ENCODE measurements at regions of chr22 and their contacts with region 1.

Region 1: DNA sequence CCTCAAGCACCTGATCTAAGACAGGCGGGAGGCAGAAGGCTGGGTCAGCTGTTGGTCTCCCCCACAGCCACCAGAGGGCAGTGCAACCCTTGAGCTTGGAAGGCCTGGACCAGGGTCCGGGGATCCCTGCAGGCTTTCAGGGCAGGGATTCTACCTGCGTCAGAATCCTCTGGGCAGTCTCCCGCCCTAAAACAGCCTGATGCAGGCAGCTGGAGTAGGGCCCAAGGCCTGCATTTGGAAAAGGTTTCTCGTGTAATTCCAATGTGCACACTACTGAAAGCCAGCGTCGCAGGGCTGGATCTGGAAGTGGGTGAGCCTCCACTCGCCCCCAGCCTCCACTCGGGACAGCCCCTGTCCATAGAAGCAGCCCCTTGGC is 31.8 kb downstream of the BID start:
- H3K4me3 ChIP-seq: no peak overlapping the region
- H3K27ac ChIP-seq: no peak overlapping the region
- H3K4me1 ChIP-seq: no peaks in the 10 kb centered on the region
- CTCF ChIP-seq: peak; percentile 39; the same call in 1 of the 2 replicates

Region 2: DNA sequence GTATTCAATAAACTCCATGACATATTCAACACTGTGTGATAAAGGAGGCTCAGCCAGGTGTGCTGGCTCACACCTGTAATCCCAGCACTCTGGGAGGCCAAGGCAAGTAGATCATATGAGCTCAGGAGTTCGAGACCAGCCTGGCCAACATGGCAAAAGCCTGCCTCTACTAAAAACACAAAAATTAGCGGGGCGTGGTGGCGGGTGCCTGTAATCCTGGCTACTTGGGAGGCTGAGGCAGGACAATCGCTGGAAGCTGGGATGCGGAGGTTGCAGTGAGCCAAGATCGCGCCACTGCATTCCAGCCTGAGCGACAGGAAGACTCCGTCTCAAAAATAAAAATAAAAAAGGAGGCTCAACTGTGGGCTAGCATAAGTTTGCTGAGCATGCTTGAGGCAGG is 183.3 kb before region 1 on chr22:
- CTCF ChIA-PET with region 1: interaction called, 14 read pairs
- POLR2A ChIA-PET with region 1: no interaction called
- H3K4me3 ChIP-seq: no peak overlapping the region
- H3K27ac ChIP-seq: no peak overlapping the region
- H3K4me1 ChIP-seq: no peaks in the 10 kb centered on the region
- CTCF ChIP-seq: no peak

Region 3: DNA sequence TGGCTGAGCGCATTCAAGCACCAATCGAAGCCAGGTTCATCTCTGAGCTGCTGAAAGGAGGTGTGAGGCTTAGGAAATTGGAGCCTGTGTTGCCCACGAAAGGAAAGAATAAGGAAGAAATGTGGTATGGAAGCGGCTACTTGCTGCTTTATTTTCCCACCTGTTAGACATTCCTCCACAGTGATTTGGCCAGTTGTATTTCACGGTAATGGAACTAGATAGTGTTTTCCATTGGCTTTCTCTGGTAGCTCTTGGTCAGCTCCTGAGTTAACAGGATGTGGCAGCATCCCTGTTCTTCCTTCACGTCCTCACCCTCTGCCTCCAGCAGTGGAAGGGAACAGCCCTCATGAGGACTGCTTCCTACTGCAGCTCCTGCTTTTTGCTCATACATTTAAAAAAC is 13.0 kb before region 1 on chr22:
- CTCF ChIA-PET with region 1: interaction called, 21 read pairs
- POLR2A ChIA-PET with region 1: no interaction called
- H3K4me3 ChIP-seq: no peak overlapping the region
- H3K27ac ChIP-seq: no peak overlapping the region
- H3K4me1 ChIP-seq: 0 out of 2 replicates have a peak, but pooled peaks cover 4% of the 10 kb centered on the region
- CTCF ChIP-seq: no peak

Region 4: DNA sequence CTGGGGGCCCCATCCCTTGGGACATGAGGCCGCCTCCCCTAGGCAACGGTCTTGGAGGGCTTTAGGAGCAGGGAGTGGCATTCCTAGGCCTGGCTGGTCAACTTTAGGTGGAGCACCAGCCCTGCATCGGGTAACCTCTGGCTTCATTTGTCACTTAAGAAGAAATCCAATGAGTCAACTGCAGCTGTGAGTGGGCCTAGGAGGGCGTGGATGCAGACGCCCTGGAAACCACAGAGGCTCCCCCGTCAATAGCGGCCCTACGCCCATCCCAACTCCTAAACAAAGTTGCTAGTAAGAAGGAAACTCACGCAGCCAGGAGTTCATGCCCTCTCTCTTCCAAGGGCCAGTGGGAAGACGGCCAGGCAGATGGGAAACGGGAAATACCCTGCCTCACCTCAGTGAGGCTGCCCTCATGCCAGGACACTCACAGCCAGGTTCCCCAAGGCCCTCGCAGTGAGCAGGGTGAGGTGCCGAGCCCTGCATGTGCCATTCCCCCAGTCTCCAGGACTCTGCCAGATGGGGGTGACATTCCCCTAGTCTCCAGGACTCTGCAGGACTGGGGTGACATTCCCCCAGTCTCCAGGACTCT is 11.0 kb after region 1 on chr22:
- CTCF ChIA-PET with region 1: interaction called, 14 read pairs
- POLR2A ChIA-PET with region 1: no interaction called
- H3K4me3 ChIP-seq: no peak overlapping the region
- H3K27ac ChIP-seq: no peak overlapping the region
- H3K4me1 ChIP-seq: no peaks in the 10 kb centered on the region
- CTCF ChIP-seq: no peak

Region 5: GRCh38 chr22:17773606-17774205 is 31.2 kb after region 1 on chr22:
- CTCF ChIA-PET with region 1: interaction called, 23 read pairs
- POLR2A ChIA-PET with region 1: interaction called, 9 read pairs
- H3K4me3 ChIP-seq: peak overlapping the region; percentile 61
- H3K27ac ChIP-seq: peak overlapping the region; percentile 83; the same call in 1 of the 2 replicates
- H3K4me1 ChIP-seq: peaks cover 5% of the 10 kb centered on the region
- CTCF ChIP-seq: no peak

Region 6: GRCh38 chr22:17785185-17786184 is 43.0 kb after region 1 on chr22:
- CTCF ChIA-PET with region 1: interaction called, 63 read pairs
- POLR2A ChIA-PET with region 1: no interaction called
- H3K4me3 ChIP-seq: no peak overlapping the region
- H3K27ac ChIP-seq: no peak overlapping the region
- H3K4me1 ChIP-seq: peaks cover 3% of the 10 kb centered on the region; the same call in 1 of the 2 replicates
- CTCF ChIP-seq: peak; percentile 88

Region 7: DNA sequence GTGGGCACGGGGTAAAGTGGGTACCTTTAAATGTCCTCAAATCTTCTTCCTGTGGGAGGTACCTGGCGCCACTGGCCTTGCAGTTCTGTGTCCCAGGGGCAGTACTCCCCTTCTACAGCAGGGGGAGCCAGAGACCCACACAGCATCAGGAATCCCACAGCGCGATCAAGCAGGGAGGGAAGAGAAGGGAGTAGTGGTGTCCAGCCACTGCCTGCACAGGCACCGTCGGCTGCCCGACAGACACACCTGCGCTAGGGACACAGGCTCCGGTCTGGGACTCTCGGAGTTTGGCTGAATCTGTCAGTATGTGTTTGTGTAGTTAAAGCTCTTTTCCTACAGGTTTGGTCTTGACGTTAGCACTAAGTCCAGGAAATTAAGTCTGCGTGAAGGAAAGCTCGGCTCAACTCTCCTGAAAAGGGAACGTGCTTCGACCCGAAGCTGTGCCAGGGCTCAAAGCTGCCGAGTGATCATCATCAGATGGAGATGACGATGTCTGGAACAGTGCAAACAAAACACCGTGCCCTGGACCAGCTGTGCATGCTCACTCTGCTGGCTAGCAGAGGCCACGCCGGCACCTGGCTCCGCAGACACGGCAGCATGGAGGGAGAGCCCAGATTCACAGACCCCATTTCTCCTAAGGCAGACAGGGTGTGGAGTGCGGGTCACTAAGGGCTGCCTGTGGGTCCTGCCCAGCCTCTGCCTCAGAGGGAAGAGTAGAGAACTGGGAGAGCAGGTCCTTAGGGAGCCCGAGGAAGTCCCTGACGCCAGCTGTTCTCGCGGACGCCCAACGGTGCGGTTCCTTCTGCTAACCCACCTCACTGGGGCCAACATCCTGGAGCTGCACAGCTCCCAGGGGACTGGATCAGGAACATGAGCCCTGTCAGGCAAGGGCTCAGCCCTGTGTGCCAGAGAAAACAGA is 87.8 kb after region 1 on chr22:
- CTCF ChIA-PET with region 1: interaction called, 14 read pairs
- POLR2A ChIA-PET with region 1: no interaction called
- H3K4me3 ChIP-seq: no peak overlapping the region
- H3K27ac ChIP-seq: no peak overlapping the region
- H3K4me1 ChIP-seq: no peaks in the 10 kb centered on the region
- CTCF ChIP-seq: peak; percentile 96

Measured in HEK293 (cell line).